Breast epithelium (tissue), 4 donors: ENCODE measurements at regions of chr1 and their contacts with region 1.

Region 1: DNA sequence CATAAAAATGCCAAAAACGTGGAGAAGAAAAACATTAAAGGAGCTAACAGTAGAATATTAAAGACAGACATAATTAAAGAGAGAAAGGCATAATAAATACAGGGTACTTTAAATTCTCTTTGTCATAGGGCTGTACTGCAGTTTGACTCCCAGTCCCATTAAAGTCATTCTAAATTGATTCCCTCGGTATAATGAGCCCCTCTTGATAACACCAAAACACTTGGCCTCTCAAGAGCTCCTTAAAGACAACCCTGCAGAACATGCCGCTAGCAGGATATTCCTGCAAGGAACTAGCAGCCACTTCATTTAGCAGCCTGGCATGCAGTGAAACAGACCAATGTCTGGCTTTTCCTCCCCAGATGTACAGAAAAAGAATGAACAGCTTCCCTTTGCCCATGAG is 273.8 kb upstream of the ESRRG start:
- DNase-seq: no peak
- H3K4me3 ChIP-seq: no peak overlapping the region
- H3K27ac ChIP-seq: no peak overlapping the region
- H3K4me1 ChIP-seq: no peaks in the 10 kb centered on the region
- H3K27me3 ChIP-seq: no peaks in the 10 kb centered on the region
- CTCF ChIP-seq: no peak
- POLR2A ChIP-seq: no peak

Region 2: DNA sequence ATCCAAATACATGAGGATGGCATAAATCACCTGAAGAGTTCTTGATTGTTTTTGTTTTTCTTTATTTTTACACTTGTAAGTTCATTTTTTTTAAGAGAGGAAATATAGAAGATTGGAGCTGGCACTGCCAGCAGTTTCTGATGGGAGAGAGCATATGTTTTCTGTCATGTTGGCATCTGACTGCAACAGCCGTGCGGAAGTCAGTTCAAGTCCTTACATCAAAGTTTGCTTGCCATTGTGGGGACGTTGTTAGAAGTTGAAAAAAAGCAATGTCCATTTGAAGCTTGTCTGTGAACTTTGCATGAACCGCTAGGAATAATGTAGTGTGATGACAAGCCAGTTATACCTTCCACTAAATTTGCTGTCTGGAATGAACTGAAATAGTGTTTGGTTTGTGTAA is 447.3 kb before region 1 on chr1:
- intact Hi-C with region 1: no loop called
- DNase-seq: no peak
- H3K4me3 ChIP-seq: no peak overlapping the region
- H3K27ac ChIP-seq: no peak overlapping the region
- H3K4me1 ChIP-seq: no peaks in the 10 kb centered on the region
- H3K27me3 ChIP-seq: no peaks in the 10 kb centered on the region
- CTCF ChIP-seq: no peak
- POLR2A ChIP-seq: no peak

Region 3: DNA sequence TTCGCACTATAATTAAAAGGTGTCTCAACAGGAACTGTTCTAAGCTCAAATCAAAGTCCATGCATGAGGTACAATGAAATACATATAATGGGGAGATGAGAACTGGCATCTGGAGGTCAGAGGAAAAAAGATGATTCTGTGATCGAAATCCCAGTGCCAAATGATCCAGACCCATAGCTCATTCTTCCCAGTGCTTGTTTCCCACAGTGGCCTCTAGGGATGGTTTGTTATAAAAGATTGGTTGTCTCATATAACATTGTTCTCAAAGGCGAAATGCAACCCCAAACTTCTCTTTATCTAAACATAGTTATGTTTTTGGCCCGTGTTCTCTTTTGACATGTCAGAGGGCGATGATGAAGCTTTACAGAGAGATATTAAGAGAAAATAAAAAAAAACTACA is 1053.3 kb after region 1 on chr1:
- intact Hi-C with region 1: loop called (anchors 10 kb)
- DNase-seq: no peak
- H3K4me3 ChIP-seq: no peak overlapping the region
- H3K27ac ChIP-seq: no peak overlapping the region
- H3K4me1 ChIP-seq: no peaks in the 10 kb centered on the region
- H3K27me3 ChIP-seq: no peaks in the 10 kb centered on the region
- CTCF ChIP-seq: no peak
- POLR2A ChIP-seq: no peak